H1 (cell line): ENCODE measurements at regions of chr1 and their contacts with region 1.

Region 1: GRCh38 chr1:175154629-175155472 is 37.7 kb downstream of the KIAA0040 start:
- DNase-seq: peak in 1 of 2 experiments; percentile 87
- H3K4me3 ChIP-seq: no peak overlapping the region
- H3K27ac ChIP-seq: no peak overlapping the region
- H3K4me1 ChIP-seq: peaks cover 0 to 2% (median under 1%) of the 10 kb centered on the region in 4 experiments; a peak in 1 of 7 replicates
- H3K27me3 ChIP-seq: peaks cover 0 to 2% (median 0%) of the 10 kb centered on the region in 4 experiments; a peak in 3 of 7 replicates
- CTCF ChIP-seq: peak; percentile 84 to 92 (median 91)
- EP300 ChIP-seq: no peak
- POLR2A ChIP-seq: no peak
- RAD21 ChIP-seq: peak; percentile 92 to 95

Region 2: DNA sequence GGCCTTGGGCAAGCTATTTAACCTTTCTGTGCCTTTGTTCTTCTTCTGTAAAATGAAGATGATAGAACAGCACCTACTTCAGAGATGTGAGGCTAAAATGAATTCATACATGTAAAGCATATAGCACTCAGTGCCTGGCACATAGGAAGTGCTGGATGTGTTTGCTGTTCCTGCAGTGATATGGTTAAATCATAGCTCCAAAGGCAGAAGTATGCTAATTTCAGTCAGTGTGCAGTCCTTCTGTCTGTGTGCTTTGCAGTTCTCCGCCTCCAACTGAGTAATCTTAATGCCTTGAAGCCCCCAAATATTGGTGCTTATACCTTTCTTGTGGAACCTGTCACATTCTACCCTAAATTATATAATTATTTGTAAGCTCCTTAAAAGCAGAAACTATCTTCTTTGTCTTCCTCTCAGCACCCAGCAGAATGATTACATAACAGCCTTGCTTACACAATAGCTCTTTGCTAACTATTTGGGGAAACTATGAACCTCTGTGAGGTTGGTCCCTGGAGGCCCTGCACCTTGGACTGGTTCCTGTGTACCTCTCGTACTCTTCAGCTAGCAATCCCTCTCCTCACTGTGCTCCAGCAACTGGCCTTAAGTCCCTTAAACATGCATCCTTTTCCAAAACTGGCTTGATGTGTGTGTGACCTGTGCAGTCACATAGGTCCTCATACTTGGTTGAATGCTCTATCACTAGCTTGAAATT is 212.2 kb before region 1 on chr1:
- CTCF ChIA-PET with region 1: no interaction called
- POLR2A ChIA-PET with region 1: no interaction called
- DNase-seq: no peak
- H3K4me3 ChIP-seq: no peak overlapping the region
- H3K27ac ChIP-seq: no peak overlapping the region
- H3K4me1 ChIP-seq: peaks cover 0 to 3% (median 0%) of the 10 kb centered on the region in 4 experiments; a peak in 1 of 7 replicates
- H3K27me3 ChIP-seq: no peaks in the 10 kb centered on the region
- CTCF ChIP-seq: no peak
- EP300 ChIP-seq: no peak
- POLR2A ChIP-seq: no peak; a peak in 1 of 3 replicates
- RAD21 ChIP-seq: no peak

Region 3: GRCh38 chr1:175124861-175125260 is 30.0 kb before region 1 on chr1:
- CTCF ChIA-PET with region 1: interaction called, 28 read pairs
- POLR2A ChIA-PET with region 1: interaction called, 4 read pairs
- DNase-seq: no peak
- H3K4me3 ChIP-seq: no peak overlapping the region
- H3K27ac ChIP-seq: no peak overlapping the region
- H3K4me1 ChIP-seq: peaks cover 0 to 8% (median 6%) of the 10 kb centered on the region in 4 experiments; a peak in 4 of 7 replicates
- H3K27me3 ChIP-seq: no peaks in the 10 kb centered on the region
- CTCF ChIP-seq: no peak
- EP300 ChIP-seq: no peak
- POLR2A ChIP-seq: no peak
- RAD21 ChIP-seq: no peak

Region 4: GRCh38 chr1:175169305-175170018 is 14.6 kb after region 1 on chr1:
- CTCF ChIA-PET with region 1: interaction called, 108 read pairs
- POLR2A ChIA-PET with region 1: interaction called, 3 read pairs
- DNase-seq: no peak
- H3K4me3 ChIP-seq: no peak overlapping the region
- H3K27ac ChIP-seq: no peak overlapping the region
- H3K4me1 ChIP-seq: no peaks in the 10 kb centered on the region
- H3K27me3 ChIP-seq: no peaks in the 10 kb centered on the region
- CTCF ChIP-seq: no peak
- EP300 ChIP-seq: no peak
- POLR2A ChIP-seq: no peak
- RAD21 ChIP-seq: no peak

Region 5: GRCh38 chr1:175192630-175193526 is 38.0 kb after region 1 on chr1 and contains the start of gene KIAA0040:
- CTCF ChIA-PET with region 1: interaction called, 21 read pairs
- POLR2A ChIA-PET with region 1: interaction called, 6 read pairs
- DNase-seq: peak in 1 of 2 experiments; percentile 72
- H3K4me3 ChIP-seq: peak within 1 kb of the TSS; percentile 62 to 85 (median 72)
- H3K27ac ChIP-seq: no peak within 1 kb of the TSS
- H3K4me1 ChIP-seq: peaks cover 0 to 5% (median 5%) of the 10 kb centered on the region in 4 experiments; a peak in 3 of 7 replicates
- H3K27me3 ChIP-seq: peaks cover 3 to 19% (median 15%) of the 10 kb centered on the region in 4 experiments
- CTCF ChIP-seq: peak in 2 of 3 experiments; percentile 16 to 25; a peak in 2 of 4 replicates
- EP300 ChIP-seq: no peak
- POLR2A ChIP-seq: no peak
- RAD21 ChIP-seq: no peak
- total RNA-seq, gene KIAA0040: 11.7 and 14.1 TPM in 2 replicates

Region 6: GRCh38 chr1:175234639-175235038 is 79.8 kb after region 1 on chr1:
- CTCF ChIA-PET with region 1: interaction called, 12 read pairs
- POLR2A ChIA-PET with region 1: no interaction called
- DNase-seq: no peak
- H3K4me3 ChIP-seq: no peak overlapping the region
- H3K27ac ChIP-seq: no peak overlapping the region
- H3K4me1 ChIP-seq: peaks cover 0 to 9% (median 0%) of the 10 kb centered on the region in 4 experiments; a peak in 2 of 7 replicates
- H3K27me3 ChIP-seq: no peaks in the 10 kb centered on the region
- CTCF ChIP-seq: no peak
- EP300 ChIP-seq: no peak
- POLR2A ChIP-seq: no peak
- RAD21 ChIP-seq: no peak

Region 7: DNA sequence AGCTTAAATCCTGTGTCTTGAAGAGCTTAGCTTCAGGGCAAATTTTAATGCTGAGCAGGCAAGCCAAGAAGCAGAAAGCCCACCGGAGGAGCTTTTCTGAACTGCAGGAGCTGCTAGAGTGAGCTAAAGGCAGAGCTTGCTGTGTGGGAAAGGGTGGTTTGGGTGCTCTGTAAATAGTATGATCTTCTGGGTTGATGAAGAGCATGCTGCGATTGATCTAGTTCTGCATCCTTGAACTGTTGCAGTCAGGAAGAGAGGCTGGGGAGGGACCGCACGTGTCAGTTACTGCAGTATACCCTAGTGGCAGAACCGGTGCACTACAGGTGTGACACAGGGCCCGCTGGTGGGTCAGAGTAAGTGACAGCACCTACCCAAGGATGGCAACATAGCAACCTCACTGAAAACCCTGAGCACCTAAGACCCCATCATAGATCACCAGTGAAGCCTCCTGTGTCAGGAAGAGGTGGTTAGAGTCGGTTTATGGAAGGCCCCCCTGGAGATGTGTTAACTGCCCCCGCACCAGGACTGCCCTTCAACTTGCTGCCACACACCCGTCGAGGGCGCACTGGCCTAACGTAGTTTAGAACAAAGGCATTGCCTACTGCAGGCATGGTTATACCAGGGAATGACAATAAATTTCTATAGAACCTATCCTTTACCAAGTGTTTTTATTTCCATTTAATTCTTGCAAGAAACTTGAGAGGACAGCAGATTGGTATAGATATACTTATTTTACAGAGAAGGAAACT is 183.7 kb after region 1 on chr1:
- CTCF ChIA-PET with region 1: interaction called, 35 read pairs
- POLR2A ChIA-PET with region 1: no interaction called
- DNase-seq: peak; percentile 29 to 92
- H3K4me3 ChIP-seq: no peak overlapping the region
- H3K27ac ChIP-seq: no peak overlapping the region
- H3K4me1 ChIP-seq: no peaks in the 10 kb centered on the region; a peak in 1 of 7 replicates
- H3K27me3 ChIP-seq: no peaks in the 10 kb centered on the region
- CTCF ChIP-seq: peak; percentile 68 to 91 (median 89)
- EP300 ChIP-seq: no peak
- POLR2A ChIP-seq: no peak
- RAD21 ChIP-seq: peak; percentile 55 to 58; a peak in 3 of 4 replicates

Region 8: GRCh38 chr1:175665616-175666015 is 510.8 kb after region 1 on chr1:
- CTCF ChIA-PET with region 1: no interaction called
- POLR2A ChIA-PET with region 1: no interaction called
- DNase-seq: no peak
- H3K4me3 ChIP-seq: no peak overlapping the region
- H3K27ac ChIP-seq: no peak overlapping the region
- H3K4me1 ChIP-seq: no peaks in the 10 kb centered on the region
- H3K27me3 ChIP-seq: no peaks in the 10 kb centered on the region; a peak in 1 of 7 replicates
- CTCF ChIP-seq: no peak
- EP300 ChIP-seq: no peak
- POLR2A ChIP-seq: no peak
- RAD21 ChIP-seq: no peak